Aorta (tissue), 5 donors: ENCODE measurements at regions of chr3 and their contacts with region 1.

Region 1: DNA sequence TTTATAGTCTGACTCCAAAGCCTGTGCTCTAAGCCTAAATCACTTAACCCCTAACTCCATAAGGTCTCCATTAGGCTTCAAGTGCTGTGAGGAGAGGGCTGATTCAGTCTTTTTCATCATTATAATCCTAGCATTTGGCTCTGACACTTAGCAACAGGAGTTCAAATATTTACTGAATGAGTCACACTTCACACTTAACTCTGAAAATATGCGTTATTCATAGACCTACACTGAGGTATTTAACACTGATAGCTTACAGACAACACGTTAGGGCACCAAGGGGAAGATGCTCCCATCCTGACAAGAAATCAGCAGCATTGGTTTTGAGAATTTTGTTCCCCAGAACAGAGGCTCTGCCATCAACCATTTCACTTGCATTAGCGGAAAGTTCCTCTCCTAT is 53.5 kb downstream of the MSL2 start:
- DNase-seq: no peak
- ATAC-seq: peak; percentile 51
- H3K4me3 ChIP-seq: no peak overlapping the region
- H3K27ac ChIP-seq: peak overlapping the region in 1 of 2 donors; percentile 88
- H3K4me1 ChIP-seq: peaks cover 4 to 11% of the 10 kb centered on the region in 2 donors
- H3K27me3 ChIP-seq: no peaks in the 10 kb centered on the region

Region 2: GRCh38 chr3:135629701-135630408 is 512.7 kb before region 1 on chr3:
- intact Hi-C with region 1: no loop called
- DNase-seq: no peak
- ATAC-seq: no peak
- H3K4me3 ChIP-seq: no peak overlapping the region
- H3K27ac ChIP-seq: no peak overlapping the region
- H3K4me1 ChIP-seq: no peaks in the 10 kb centered on the region
- H3K27me3 ChIP-seq: no peaks in the 10 kb centered on the region

Region 3: GRCh38 chr3:136250226-136250902 is 107.8 kb after region 1 on chr3 and contains the start of gene PCCB:
- intact Hi-C with region 1: loop called in 1 of 2 experiments (anchors 5 kb)
- DNase-seq: peak; percentile 97 to 98
- ATAC-seq: peak; percentile 98
- H3K4me3 ChIP-seq: peak within 1 kb of the TSS; percentile 19 to 79
- H3K27ac ChIP-seq: peak within 1 kb of the TSS in 1 of 2 donors; percentile 49
- H3K4me1 ChIP-seq: no peaks in the 10 kb centered on the region
- H3K27me3 ChIP-seq: no peaks in the 10 kb centered on the region
- total RNA-seq, gene PCCB: 16.4 to 18.7 TPM